AG04450 (cell line): ENCODE measurements at regions of chr4 and their contacts with region 1.

Region 1: GRCh38 chr4:99998062-99998867 is 48.2 kb upstream of the H2AZ1 start:
- DNase-seq: no peak
- H3K4me3 ChIP-seq: no peak overlapping the region
- H3K27ac ChIP-seq: no peak overlapping the region
- H3K27me3 ChIP-seq: no peaks in the 10 kb centered on the region
- CTCF ChIP-seq: peak; percentile 55

Region 2: GRCh38 chr4:99875072-99875471 is 123.2 kb before region 1 on chr4:
- CTCF ChIA-PET with region 1: no interaction called
- POLR2A ChIA-PET with region 1: no interaction called
- DNase-seq: no peak
- H3K4me3 ChIP-seq: no peak overlapping the region
- H3K27ac ChIP-seq: no peak overlapping the region
- H3K27me3 ChIP-seq: no peaks in the 10 kb centered on the region
- CTCF ChIP-seq: no peak

Region 3: GRCh38 chr4:99949034-99949998 is 48.9 kb before region 1 on chr4:
- CTCF ChIA-PET with region 1: interaction called, 30 read pairs
- POLR2A ChIA-PET with region 1: interaction called, 3 read pairs
- DNase-seq: peak; percentile 86
- H3K4me3 ChIP-seq: peak overlapping the region; percentile 90
- H3K27ac ChIP-seq: peak overlapping the region; percentile 91
- H3K27me3 ChIP-seq: no peaks in the 10 kb centered on the region
- CTCF ChIP-seq: peak; percentile 92

Region 4: GRCh38 chr4:99983289-99983943 is 14.8 kb before region 1 on chr4:
- CTCF ChIA-PET with region 1: interaction called, 39 read pairs
- POLR2A ChIA-PET with region 1: no interaction called
- DNase-seq: no peak
- H3K4me3 ChIP-seq: no peak overlapping the region
- H3K27ac ChIP-seq: no peak overlapping the region
- H3K27me3 ChIP-seq: no peaks in the 10 kb centered on the region
- CTCF ChIP-seq: no peak

Region 5: GRCh38 chr4:100026066-100026465 is 27.8 kb after region 1 on chr4:
- CTCF ChIA-PET with region 1: interaction called, 11 read pairs
- POLR2A ChIA-PET with region 1: no interaction called
- DNase-seq: no peak
- H3K4me3 ChIP-seq: no peak overlapping the region
- H3K27ac ChIP-seq: no peak overlapping the region
- H3K27me3 ChIP-seq: no peaks in the 10 kb centered on the region
- CTCF ChIP-seq: no peak

Region 6: DNA sequence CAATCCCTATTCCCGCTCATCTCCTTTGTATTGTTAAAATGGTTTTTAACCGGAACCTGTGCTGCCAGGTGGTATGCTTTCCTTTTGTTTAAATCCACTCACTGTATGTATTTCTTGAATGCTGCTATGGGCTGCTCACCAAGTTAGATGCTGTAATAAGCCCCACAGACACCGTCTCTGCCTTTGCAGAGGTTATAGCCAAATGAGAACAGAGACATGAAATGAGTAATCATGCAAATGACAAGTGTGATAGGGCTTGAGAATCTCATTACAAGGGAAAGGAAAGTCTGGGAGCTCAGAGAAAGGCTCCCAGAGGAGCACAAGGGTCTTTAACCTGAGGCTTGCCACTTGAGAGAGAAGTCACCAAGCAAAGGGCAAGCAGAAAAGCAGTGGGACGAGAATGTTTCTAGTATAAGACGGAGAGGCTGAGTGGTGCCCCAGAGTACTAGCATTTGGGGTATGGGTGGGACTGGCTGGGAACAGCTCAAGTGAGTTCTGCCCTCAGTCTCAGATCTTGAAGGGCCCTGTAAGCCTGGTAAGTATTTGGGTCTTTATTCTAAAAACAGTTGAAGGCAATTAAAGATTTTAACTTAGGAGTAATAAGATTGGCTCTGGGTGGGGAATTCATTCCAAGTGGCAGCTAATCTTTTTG is 62.6 kb after region 1 on chr4:
- CTCF ChIA-PET with region 1: interaction called, 91 read pairs
- POLR2A ChIA-PET with region 1: no interaction called
- DNase-seq: no peak
- H3K4me3 ChIP-seq: no peak overlapping the region
- H3K27ac ChIP-seq: no peak overlapping the region
- H3K27me3 ChIP-seq: no peaks in the 10 kb centered on the region
- CTCF ChIP-seq: no peak

Region 7: GRCh38 chr4:100082852-100083251 is 84.6 kb after region 1 on chr4:
- CTCF ChIA-PET with region 1: interaction called, 12 read pairs
- POLR2A ChIA-PET with region 1: no interaction called
- DNase-seq: no peak
- H3K4me3 ChIP-seq: no peak overlapping the region
- H3K27ac ChIP-seq: no peak overlapping the region
- H3K27me3 ChIP-seq: no peaks in the 10 kb centered on the region
- CTCF ChIP-seq: no peak